OCI-LY7 (cell line): ENCODE measurements at regions of chr11 and their contacts with region 1.

Region 1: GRCh38 chr11:19076744-19077589 is 16.4 kb upstream of the MRGPRX2 start:
- DNase-seq: peak; percentile 48
- H3K4me3 ChIP-seq: no peak overlapping the region
- H3K27ac ChIP-seq: no peak overlapping the region
- H3K4me1 ChIP-seq: no peaks in the 10 kb centered on the region
- CTCF ChIP-seq: peak; percentile 99

Region 2: GRCh38 chr11:19259487-19260345 is 182.7 kb after region 1 on chr11:
- CTCF ChIA-PET with region 1: no interaction called
- POLR2A ChIA-PET with region 1: no interaction called
- intact Hi-C with region 1: loop called (anchors 5 kb)
- DNase-seq: peak; percentile 70
- H3K4me3 ChIP-seq: no peak overlapping the region
- H3K27ac ChIP-seq: no peak overlapping the region
- H3K4me1 ChIP-seq: no peaks in the 10 kb centered on the region
- CTCF ChIP-seq: peak; percentile 97

Region 3: GRCh38 chr11:19428206-19429002 is 351.4 kb after region 1 on chr11:
- CTCF ChIA-PET with region 1: no interaction called
- POLR2A ChIA-PET with region 1: no interaction called
- intact Hi-C with region 1: no loop called
- DNase-seq: no peak
- H3K4me3 ChIP-seq: no peak overlapping the region
- H3K27ac ChIP-seq: no peak overlapping the region
- H3K4me1 ChIP-seq: peaks cover 71% of the 10 kb centered on the region
- CTCF ChIP-seq: 0 out of 2 replicates have a peak, but pooled peaks have one; percentile 20